ENCODE measurements at regions of chr16 and their contacts with region 1.

Region 1: GRCh38 chr16:87950765-87951549 is at the start of gene BANP:
- DNase-seq: peak; percentile 99
- H3K4me3 Mint-ChIP-seq: peak within 1 kb of the TSS; percentile 95
- H3K27ac Mint-ChIP-seq: peak within 1 kb of the TSS; percentile 99
- H3K4me1 Mint-ChIP-seq: peaks cover 62% of the 10 kb centered on the region
- H3K27me3 Mint-ChIP-seq: no peaks in the 10 kb centered on the region
- total RNA-seq, gene BANP: 36.8 and 44.9 TPM in 2 replicates

Region 2: DNA sequence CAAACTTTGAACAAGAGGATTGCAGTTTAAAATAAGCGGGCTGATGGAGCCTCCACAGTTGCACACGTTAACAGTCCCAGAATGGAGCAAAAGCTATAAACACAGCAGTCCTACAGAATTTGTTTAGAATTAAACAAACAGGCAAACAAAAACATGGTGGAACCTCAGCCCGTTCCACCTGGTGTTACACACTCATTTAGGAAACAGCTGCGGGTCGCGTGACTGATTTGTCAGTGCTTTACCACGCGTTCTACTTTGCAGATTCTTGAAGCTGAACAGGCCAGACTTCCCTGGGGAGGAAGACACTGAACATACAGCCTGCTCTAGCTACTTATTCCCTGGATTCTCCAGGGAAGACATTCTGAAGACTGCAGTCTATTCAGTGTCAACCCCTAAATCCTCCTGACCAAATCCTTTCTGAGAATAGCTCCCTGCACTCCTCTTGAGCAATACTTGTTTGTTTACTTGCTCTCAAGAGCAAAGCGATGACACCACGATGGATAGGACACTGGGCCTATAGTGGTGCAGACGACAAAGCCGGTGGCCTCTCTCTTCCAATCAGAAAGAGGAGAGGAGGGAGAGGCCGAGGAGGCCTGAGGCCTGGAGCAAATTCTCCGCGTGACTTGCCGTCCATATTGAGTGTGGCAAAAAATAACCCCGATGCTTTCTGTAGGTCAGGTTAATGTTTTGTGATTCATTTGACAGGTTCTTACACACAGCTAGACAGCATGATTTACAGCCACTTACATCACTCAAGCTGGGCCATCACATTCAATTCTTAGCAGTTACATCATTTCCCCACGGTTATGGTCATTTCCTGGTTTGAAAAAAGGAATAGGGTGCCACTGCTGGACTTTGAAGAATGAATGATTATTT is 562.8 kb before region 1 on chr16:
- intact Hi-C with region 1: loop called (anchors 2 kb)
- DNase-seq: peak; percentile 96
- H3K4me3 Mint-ChIP-seq: peak overlapping the region; percentile 44
- H3K27ac Mint-ChIP-seq: peak overlapping the region; percentile 96
- H3K4me1 Mint-ChIP-seq: peaks cover 40% of the 10 kb centered on the region
- H3K27me3 Mint-ChIP-seq: peaks cover 2% of the 10 kb centered on the region

Region 3: GRCh38 chr16:87864331-87864989 is 86.5 kb before region 1 on chr16:
- intact Hi-C with region 1: loop called (anchors 2 kb)
- DNase-seq: no peak
- H3K4me3 Mint-ChIP-seq: peak overlapping the region; percentile 97
- H3K27ac Mint-ChIP-seq: peak overlapping the region; percentile 53
- H3K4me1 Mint-ChIP-seq: peaks cover 46% of the 10 kb centered on the region
- H3K27me3 Mint-ChIP-seq: peaks cover 2% of the 10 kb centered on the region

Region 4: GRCh38 chr16:87895641-87896141 is 55.3 kb before region 1 on chr16:
- intact Hi-C with region 1: loop called (anchors 5 kb)
- DNase-seq: peak; percentile 94
- H3K4me3 Mint-ChIP-seq: peak overlapping the region; percentile 72
- H3K27ac Mint-ChIP-seq: peak overlapping the region; percentile 100
- H3K4me1 Mint-ChIP-seq: peaks cover 42% of the 10 kb centered on the region
- H3K27me3 Mint-ChIP-seq: no peaks in the 10 kb centered on the region

Region 5: GRCh38 chr16:87963400-87963799 is 12.4 kb after region 1 on chr16:
- intact Hi-C with region 1: loop called (anchors 1 kb)
- DNase-seq: peak; percentile 87
- H3K4me3 Mint-ChIP-seq: peak overlapping the region; percentile 55
- H3K27ac Mint-ChIP-seq: peak overlapping the region; percentile 89
- H3K4me1 Mint-ChIP-seq: peaks cover 57% of the 10 kb centered on the region
- H3K27me3 Mint-ChIP-seq: no peaks in the 10 kb centered on the region

Region 6: GRCh38 chr16:88533932-88534732 is 583.2 kb after region 1 on chr16:
- intact Hi-C with region 1: loop called (anchors 10 kb)
- DNase-seq: peak; percentile 94
- H3K4me3 Mint-ChIP-seq: peak overlapping the region; percentile 35
- H3K27ac Mint-ChIP-seq: no peak overlapping the region
- H3K4me1 Mint-ChIP-seq: peaks cover 3% of the 10 kb centered on the region
- H3K27me3 Mint-ChIP-seq: peaks cover under 1% of the 10 kb centered on the region

Measured in activated CD4-positive, alpha-beta T cell treated with anti-CD3 and anti-CD28 coated beads, Interleukin-2, amount 10 ng/mL, durations not matched to agents 24 days and 14 days (primary cell).